ENCODE measurements at regions of chr13 and their contacts with region 1.

Region 1: GRCh38 chr13:43905435-43906031 is 25.8 kb downstream of the LACC1 start:
- DNase-seq: peak; percentile 21 to 52 (median 24)
- ATAC-seq: peak; percentile 64; the same call in 2 of the 3 replicates
- H3K4me3 ChIP-seq: no peak overlapping the region
- H3K27ac ChIP-seq: no peak overlapping the region
- H3K4me1 ChIP-seq: no peaks in the 10 kb centered on the region
- H3K27me3 ChIP-seq: no peaks in the 10 kb centered on the region
- CTCF ChIP-seq: peak; percentile 43 to 68 (median 45); a peak in 5 of 6 replicates
- EP300 ChIP-seq: no peak
- POLR2A ChIP-seq: no peak
- RAD21 ChIP-seq: peak; percentile 72 to 81

Region 2: DNA sequence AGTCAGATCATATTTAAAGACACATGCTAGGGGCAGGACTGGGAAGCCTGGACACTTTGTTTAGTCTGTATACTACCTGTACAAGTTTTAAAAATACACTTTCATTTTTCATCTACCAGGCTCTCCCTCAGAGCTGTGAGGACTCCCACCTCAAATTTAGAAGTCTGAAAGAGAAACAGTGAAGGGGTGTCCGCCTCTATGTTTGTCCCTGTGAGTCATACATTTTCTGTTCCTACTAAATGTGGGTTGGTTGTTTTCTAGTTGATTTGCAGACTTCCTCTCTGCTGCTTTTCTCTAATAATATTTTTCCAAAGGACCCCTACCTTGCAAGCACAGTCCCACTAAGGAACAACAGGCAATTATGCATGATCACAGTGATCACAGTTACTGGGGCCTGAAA is 229.2 kb before region 1 on chr13:
- CTCF ChIA-PET with region 1: no interaction called
- POLR2A ChIA-PET with region 1: no interaction called
- in situ Hi-C with region 1: no loop called
- intact Hi-C with region 1: no loop called
- DNase-seq: no peak
- ATAC-seq: no peak
- H3K4me3 ChIP-seq: no peak overlapping the region
- H3K27ac ChIP-seq: no peak overlapping the region
- H3K4me1 ChIP-seq: no peaks in the 10 kb centered on the region
- H3K27me3 ChIP-seq: no peaks in the 10 kb centered on the region
- CTCF ChIP-seq: no peak
- EP300 ChIP-seq: no peak
- POLR2A ChIP-seq: no peak
- RAD21 ChIP-seq: no peak

Region 3: DNA sequence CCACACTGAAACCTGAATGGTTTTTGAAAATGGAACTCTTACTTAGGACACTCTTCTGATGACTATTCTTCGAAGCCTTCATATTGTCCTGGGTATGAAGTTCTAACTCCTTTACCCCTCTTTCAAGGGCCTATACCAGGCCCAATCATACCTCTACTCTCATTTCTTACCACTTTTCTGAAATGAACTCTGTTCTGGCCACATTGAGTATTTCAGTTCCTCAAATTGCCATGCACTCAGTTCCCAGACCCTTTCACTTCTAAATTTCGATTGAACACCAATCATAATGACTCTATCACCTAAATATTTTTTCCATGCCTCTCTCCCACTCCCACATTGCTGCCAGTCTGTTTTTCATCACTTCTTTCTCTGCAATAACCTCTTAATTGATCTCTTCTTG is 27.8 kb after region 1 on chr13:
- CTCF ChIA-PET with region 1: no interaction called
- POLR2A ChIA-PET with region 1: no interaction called
- in situ Hi-C with region 1: no loop called
- intact Hi-C with region 1: no loop called
- DNase-seq: no peak
- ATAC-seq: no peak
- H3K4me3 ChIP-seq: no peak overlapping the region
- H3K27ac ChIP-seq: no peak overlapping the region
- H3K4me1 ChIP-seq: no peaks in the 10 kb centered on the region
- H3K27me3 ChIP-seq: no peaks in the 10 kb centered on the region
- CTCF ChIP-seq: no peak
- EP300 ChIP-seq: no peak
- POLR2A ChIP-seq: no peak
- RAD21 ChIP-seq: no peak

Region 4: DNA sequence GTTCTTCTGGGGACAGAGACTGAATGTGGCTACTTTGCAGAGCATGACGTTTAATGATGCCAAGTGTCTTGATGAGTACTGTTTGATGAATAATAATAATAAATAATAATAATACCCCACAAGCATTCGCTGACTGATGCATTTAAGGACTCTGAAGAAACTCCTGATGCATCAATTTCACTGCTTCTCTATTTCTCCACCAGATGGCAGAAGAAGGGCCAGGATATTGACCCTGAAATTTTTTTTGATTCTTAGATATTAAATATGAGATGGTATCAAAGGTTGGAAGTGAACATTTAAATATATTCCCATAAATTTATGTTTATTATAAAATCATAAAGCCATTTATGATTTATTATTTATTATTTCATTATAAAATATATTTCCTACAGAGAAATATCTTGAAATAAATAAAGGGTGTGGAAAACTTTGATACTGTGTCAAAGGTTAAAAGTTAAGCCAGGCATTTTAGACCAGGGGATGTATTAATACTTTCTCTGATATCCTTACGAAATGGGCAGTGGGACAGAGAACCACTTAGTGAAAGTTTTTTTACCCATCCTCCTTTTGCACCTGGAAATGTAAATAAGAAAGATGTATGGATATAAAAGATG is 145.0 kb after region 1 on chr13:
- CTCF ChIA-PET with region 1: no interaction called
- POLR2A ChIA-PET with region 1: no interaction called
- in situ Hi-C with region 1: no loop called
- intact Hi-C with region 1: loop called (anchors 2 kb)
- DNase-seq: peak in 3 of 4 experiments; percentile 4 to 6 (median 6)
- ATAC-seq: no peak
- H3K4me3 ChIP-seq: no peak overlapping the region
- H3K27ac ChIP-seq: no peak overlapping the region
- H3K4me1 ChIP-seq: no peaks in the 10 kb centered on the region
- H3K27me3 ChIP-seq: no peaks in the 10 kb centered on the region; a peak in 1 of 5 replicates
- CTCF ChIP-seq: peak in 2 of 3 experiments; percentile 24 to 52; a peak in 2 of 6 replicates
- EP300 ChIP-seq: no peak
- POLR2A ChIP-seq: no peak
- RAD21 ChIP-seq: peak; percentile 45 to 54

Region 5: GRCh38 chr13:44078806-44079376 is 173.4 kb after region 1 on chr13:
- CTCF ChIA-PET with region 1: no interaction called
- POLR2A ChIA-PET with region 1: no interaction called
- in situ Hi-C with region 1: no loop called
- intact Hi-C with region 1: no loop called
- DNase-seq: no peak
- ATAC-seq: no peak
- H3K4me3 ChIP-seq: no peak overlapping the region
- H3K27ac ChIP-seq: no peak overlapping the region
- H3K4me1 ChIP-seq: no peaks in the 10 kb centered on the region
- H3K27me3 ChIP-seq: no peaks in the 10 kb centered on the region
- CTCF ChIP-seq: no peak
- EP300 ChIP-seq: no peak
- POLR2A ChIP-seq: no peak
- RAD21 ChIP-seq: no peak

Region 6: GRCh38 chr13:44191504-44192171 is 286.1 kb after region 1 on chr13:
- CTCF ChIA-PET with region 1: no interaction called
- POLR2A ChIA-PET with region 1: no interaction called
- in situ Hi-C with region 1: loop called (anchors 25 kb)
- intact Hi-C with region 1: no loop called
- DNase-seq: peak; percentile 31 to 53 (median 44)
- ATAC-seq: peak; percentile 96
- H3K4me3 ChIP-seq: no peak overlapping the region
- H3K27ac ChIP-seq: no peak overlapping the region
- H3K4me1 ChIP-seq: no peaks in the 10 kb centered on the region
- H3K27me3 ChIP-seq: peaks cover 0 to 4% of the 10 kb centered on the region in 2 experiments; a peak in 1 of 5 replicates
- CTCF ChIP-seq: peak; percentile 61 to 69 (median 67)
- EP300 ChIP-seq: no peak
- POLR2A ChIP-seq: no peak
- RAD21 ChIP-seq: peak; percentile 55 to 62

Region 7: DNA sequence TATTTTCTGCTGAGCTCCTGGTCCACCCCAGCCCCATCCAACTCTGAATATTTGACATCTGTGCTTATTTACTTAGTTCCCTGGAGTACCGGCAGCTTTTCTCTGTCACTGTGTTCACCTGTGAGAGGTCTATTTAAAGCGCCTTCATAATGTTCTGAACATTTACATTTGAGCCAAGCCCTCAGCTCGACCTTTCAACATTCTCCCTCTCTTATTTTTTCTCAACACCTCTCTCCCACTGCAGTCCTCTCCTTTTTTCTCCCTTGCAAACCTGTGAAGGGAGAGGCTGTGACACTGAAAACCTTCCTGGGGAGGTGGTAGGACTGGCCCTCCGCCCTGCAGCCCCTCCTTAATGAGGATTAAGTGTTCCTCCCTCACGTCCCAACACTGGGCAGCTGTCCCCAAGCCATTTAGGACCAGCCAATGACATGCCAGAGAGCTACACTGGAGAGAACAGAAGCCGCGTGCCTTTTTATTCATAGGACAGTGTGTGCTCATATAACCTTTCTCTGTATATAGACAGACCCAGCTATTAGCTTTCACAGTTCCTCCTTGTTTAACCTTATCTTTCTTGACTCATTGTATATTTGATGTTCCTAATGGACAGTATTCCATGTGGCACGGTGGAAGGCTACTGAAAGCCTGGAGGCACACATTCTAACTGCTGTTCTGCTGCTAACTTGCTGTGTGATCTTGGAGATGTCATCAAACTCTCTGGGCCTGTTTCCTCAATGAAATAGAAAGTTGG is 949.0 kb after region 1 on chr13:
- CTCF ChIA-PET with region 1: no interaction called
- POLR2A ChIA-PET with region 1: no interaction called
- in situ Hi-C with region 1: no loop called
- intact Hi-C with region 1: no loop called
- DNase-seq: no peak
- ATAC-seq: no peak
- H3K4me3 ChIP-seq: no peak overlapping the region
- H3K27ac ChIP-seq: no peak overlapping the region
- H3K4me1 ChIP-seq: no peaks in the 10 kb centered on the region
- H3K27me3 ChIP-seq: peaks cover 2 to 9% of the 10 kb centered on the region in 2 experiments; a peak in 4 of 5 replicates
- CTCF ChIP-seq: no peak
- EP300 ChIP-seq: no peak
- POLR2A ChIP-seq: no peak
- RAD21 ChIP-seq: no peak